ENCODE measurements at regions of chr16 and their contacts with region 1.

Region 1: GRCh38 chr16:8797364-8798173 is at the starts of genes PMM2 and TMEM186:
- DNase-seq: peak; percentile 97 to 100 (median 99)

Region 2: GRCh38 chr16:8572919-8573724 is 224.4 kb before region 1 on chr16:
- intact Hi-C with region 1: loop called (anchors 5 kb)
- DNase-seq: peak in 17 of 42 donors; percentile 10 to 58 (median 33)

Region 3: DNA sequence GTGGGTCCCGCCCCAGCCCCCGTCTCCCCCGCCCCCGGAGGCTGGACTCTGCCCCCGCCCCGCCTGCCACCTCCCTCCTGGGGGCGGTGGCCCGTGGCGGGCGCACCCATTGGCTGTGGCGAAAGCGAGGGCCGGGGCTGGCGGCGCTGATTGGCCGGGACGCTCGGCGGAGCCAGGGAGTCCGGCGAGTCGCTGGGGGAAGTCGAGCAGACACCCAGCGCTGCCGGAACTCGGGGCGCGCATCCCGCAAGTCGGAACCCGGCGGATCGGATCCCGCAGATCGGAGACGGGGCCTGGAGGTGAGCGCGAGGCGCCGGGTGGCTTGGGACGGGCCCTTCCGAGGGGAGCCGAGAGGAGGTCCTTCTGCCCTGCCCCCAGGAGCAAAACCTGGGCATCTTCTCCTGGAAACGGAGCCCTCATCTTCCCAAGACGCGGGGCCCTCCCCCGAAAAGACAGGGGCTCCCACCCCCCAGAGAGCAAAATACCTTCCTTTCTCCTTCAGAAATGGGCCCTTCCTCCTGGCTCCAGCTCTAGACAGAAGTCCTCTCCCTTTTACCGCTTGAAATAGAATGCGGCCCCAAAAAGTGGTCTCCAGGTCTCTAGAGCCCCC is 123.1 kb before region 1 on chr16 and contains the start of gene ABAT:
- intact Hi-C with region 1: loop called (anchors 5 kb)
- DNase-seq: peak; percentile 84 to 98 (median 96)

Region 4: DNA sequence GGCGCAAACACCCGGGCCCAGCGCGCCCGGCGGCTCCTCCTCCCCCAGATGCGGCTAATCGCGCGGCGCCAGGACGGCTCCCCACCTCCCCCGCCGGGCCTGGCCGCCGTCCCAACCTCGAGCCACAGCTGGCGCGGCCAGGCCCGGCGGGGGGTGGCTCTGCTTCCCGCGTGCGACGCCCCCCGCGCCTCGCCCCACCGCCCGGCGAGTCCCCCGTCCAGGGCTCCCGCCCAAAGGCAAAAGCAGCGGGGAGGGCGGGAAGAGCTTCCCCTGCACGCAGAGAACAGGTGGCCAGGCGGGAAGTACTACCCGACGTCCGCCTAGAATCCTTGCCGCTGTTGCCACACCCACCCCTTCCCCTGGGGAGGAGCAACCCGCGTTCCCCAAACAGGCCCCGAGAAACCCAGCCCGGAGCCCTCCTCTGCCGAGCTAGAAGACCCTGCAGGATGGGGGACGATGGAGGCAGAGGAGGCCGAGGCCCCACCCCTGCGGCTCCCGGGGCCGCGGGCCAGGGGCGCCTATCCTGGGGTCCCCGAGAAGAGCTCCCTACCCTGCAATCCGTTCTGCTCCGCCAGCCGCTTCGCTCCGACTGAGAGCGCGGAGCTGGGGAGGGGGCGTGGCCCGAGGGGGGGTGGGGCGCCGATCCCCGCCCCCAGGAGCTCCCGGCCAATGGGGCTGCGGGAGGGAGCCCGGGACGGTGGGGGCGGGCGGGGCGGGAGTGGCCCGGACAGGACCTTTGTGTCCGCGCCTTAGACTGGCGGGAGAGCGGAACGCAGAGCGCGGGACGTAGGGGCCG is 71.0 kb after region 1 on chr16 and contains the start of gene CARHSP1:
- intact Hi-C with region 1: loop called (anchors 5 kb)
- DNase-seq: peak; percentile 53 to 93 (median 85)

Region 5: DNA sequence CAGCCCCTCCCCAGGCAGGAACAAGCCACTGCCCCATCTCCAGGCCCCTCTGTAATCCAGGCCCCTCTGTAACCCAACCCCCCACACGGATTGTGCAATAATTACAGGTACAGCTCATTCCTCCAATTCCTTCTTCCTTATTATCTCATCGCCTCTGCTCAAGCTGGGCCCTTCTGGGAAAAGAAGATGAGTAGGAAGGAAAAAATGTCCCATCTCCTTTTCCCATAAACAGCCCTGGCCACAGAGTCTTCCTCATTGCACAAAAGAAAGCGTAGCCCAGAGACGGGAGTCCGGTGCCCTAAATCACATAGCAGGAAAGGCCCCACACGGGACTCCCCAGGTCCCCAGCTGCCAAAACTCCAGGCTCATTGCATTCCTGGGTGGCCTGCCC is 80.9 kb after region 1 on chr16:
- intact Hi-C with region 1: loop called (anchors 5 kb)
- DNase-seq: no peak